Mucosa of descending colon (tissue), 3 donors: ENCODE measurements at regions of chr3 and their contacts with region 1.

Region 1: GRCh38 chr3:54146506-54147239 is 24.3 kb downstream of the CACNA2D3 start:
- DNase-seq: peak in 2 of 3 donors; percentile 63 to 71
- ATAC-seq: peak; percentile 82
- H3K4me3 ChIP-seq: no peak overlapping the region
- H3K4me1 ChIP-seq: no peaks in the 10 kb centered on the region
- CTCF ChIP-seq: peak; percentile 47

Region 2: GRCh38 chr3:54374214-54374855 is 227.7 kb after region 1 on chr3:
- intact Hi-C with region 1: loop called in 1 of 2 experiments (anchors 10 kb)
- DNase-seq: peak in 2 of 3 donors; percentile 51 to 71
- ATAC-seq: peak; percentile 57
- H3K4me3 ChIP-seq: no peak overlapping the region
- H3K4me1 ChIP-seq: no peaks in the 10 kb centered on the region
- CTCF ChIP-seq: no peak